Caco-2 (cell line): ENCODE measurements at regions of chr7 and their contacts with region 1.

Region 1: GRCh38 chr7:43834463-43835251 is 34.7 kb downstream of the MRPS24 start:
- DNase-seq: no peak
- H3K4me3 ChIP-seq: no peak overlapping the region
- H3K4me3 Mint-ChIP-seq: no peak overlapping the region
- H3K27ac Mint-ChIP-seq: no peak overlapping the region
- H3K4me1 ChIP-seq: 0 out of 2 replicates have a peak, but pooled peaks cover 3% of the 10 kb centered on the region
- H3K4me1 Mint-ChIP-seq: no peaks in the 10 kb centered on the region
- H3K27me3 ChIP-seq: no peaks in the 10 kb centered on the region
- H3K27me3 Mint-ChIP-seq: no peaks in the 10 kb centered on the region
- CTCF ChIP-seq: no peak

Region 2: DNA sequence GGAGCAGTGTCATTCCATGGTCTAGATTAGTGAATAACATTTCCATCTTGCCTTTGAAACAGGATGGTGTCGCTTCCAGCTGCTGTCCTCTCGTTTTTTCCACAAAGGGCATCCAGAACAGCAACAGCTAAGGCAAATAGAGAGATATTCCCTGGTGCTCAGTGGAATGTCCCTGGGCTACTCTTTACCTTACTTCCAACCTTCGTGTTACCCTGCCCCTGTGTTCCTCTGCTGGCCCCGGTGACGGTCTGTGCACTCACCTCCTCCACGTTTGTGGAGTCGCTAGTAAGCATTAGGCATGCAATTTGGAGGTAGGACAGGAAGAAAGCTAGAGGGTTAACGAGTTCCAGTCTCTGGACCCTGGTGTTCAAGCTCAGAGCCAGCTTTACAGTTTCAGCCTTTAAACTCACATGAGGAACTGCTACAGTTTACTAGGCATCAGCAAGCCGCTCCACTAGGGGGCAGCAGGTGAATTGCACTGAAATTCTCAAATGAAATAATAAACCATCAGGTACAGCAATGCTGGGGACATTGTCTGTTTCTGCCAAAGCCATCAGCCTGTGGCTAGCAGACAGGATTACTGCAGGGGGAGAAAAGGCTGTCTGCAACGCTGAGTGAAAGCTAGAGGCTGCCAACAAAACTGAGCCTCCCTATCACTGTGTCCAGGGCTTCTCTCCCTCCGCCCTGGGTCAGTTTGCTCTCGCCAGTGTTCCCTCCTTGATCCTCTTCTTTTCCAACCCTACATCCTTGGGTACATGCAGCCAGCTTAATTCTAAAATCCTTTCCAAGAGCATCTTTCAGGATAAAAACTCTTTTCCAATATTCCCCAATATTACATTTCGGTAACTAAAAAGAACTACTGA is 893.4 kb before region 1 on chr7:
- CTCF ChIA-PET with region 1: no interaction called
- POLR2A ChIA-PET with region 1: no interaction called
- intact Hi-C with region 1: loop called (anchors 2 kb)
- DNase-seq: peak; percentile 74 to 78
- H3K4me3 ChIP-seq: no peak overlapping the region
- H3K4me3 Mint-ChIP-seq: no peak overlapping the region
- H3K27ac Mint-ChIP-seq: no peak overlapping the region
- H3K4me1 ChIP-seq: no peaks in the 10 kb centered on the region
- H3K4me1 Mint-ChIP-seq: no peaks in the 10 kb centered on the region
- H3K27me3 ChIP-seq: no peaks in the 10 kb centered on the region
- H3K27me3 Mint-ChIP-seq: no peaks in the 10 kb centered on the region
- CTCF ChIP-seq: peak; percentile 86 to 91

Region 3: DNA sequence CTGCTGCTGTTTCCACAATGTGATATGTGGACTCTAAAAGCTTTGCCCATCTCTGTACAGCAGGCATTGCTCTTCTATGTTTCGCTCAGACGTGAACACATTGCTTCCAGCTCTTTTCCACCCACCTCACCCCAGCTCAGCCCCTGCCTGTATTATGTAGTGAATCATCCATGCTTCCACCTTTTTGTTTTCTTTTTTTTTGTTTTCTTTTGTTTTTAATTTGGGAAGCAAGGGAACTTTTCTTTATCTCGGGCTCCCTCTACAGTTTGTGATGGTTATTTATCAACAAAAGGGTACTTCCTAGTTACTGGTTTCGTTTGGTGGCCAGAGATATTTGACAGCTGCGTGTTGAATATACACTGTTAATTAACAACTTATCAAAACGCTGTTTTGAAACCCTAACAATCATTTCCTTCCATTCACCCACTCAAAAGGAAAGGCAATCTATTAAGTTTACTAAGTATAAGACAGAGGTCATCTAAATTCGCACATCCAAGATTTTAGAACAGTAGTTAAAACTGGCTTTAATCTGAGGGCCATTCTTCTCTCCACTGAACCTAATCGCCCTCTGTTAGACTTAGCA is 379.6 kb before region 1 on chr7:
- CTCF ChIA-PET with region 1: interaction called, 4 read pairs
- POLR2A ChIA-PET with region 1: no interaction called
- intact Hi-C with region 1: loop called (anchors 5 kb)
- DNase-seq: peak in 1 of 2 experiments; percentile 28
- H3K4me3 ChIP-seq: no peak overlapping the region
- H3K4me3 Mint-ChIP-seq: no peak overlapping the region
- H3K27ac Mint-ChIP-seq: no peak overlapping the region
- H3K4me1 ChIP-seq: peaks cover 13% of the 10 kb centered on the region; the same call in 1 of the 2 replicates
- H3K4me1 Mint-ChIP-seq: peaks cover 21% of the 10 kb centered on the region
- H3K27me3 ChIP-seq: no peaks in the 10 kb centered on the region
- H3K27me3 Mint-ChIP-seq: no peaks in the 10 kb centered on the region
- CTCF ChIP-seq: peak; percentile 45 to 50

Region 4: DNA sequence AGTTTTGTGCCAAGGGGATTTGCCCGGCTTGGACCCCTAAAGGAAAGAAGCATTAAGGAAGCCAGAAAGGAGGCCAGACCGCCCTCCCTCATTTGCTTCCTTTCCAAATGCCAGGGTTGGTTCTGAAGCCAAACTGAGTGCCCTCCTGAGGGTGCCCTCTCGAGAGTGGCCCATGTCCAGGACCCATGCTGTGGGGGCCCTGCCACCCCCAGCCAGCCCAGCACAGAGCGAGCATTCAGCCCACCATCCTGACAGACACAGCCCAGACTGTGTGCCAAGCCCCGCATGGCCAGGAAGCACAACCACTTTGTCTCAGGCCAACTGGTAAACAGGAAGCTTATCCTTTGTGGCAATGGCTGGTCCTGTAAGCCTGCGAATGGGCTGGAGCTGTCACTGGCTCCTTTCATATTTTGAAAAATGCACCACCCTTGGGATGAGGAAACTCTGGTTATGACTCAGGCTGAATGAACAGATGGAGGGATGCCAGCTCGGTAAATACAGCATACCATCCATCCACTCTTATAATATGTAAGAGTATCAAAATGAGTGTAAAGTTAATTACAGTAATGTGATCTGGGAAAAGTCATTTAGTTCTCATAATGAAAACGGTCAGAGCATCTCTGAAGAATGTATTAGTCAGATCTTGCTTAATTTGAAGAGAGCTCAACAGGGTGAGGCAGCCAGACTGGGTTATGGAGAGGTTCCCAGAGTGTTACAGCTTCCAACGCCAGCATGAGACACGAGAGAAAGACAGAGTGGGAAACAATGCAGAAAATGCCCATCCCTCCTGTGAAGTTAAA is 186.8 kb before region 1 on chr7:
- CTCF ChIA-PET with region 1: no interaction called
- POLR2A ChIA-PET with region 1: no interaction called
- intact Hi-C with region 1: loop called (anchors 10 kb)
- DNase-seq: no peak
- H3K4me3 ChIP-seq: no peak overlapping the region
- H3K4me3 Mint-ChIP-seq: no peak overlapping the region
- H3K27ac Mint-ChIP-seq: no peak overlapping the region
- H3K4me1 ChIP-seq: no peaks in the 10 kb centered on the region
- H3K4me1 Mint-ChIP-seq: no peaks in the 10 kb centered on the region
- H3K27me3 ChIP-seq: no peaks in the 10 kb centered on the region
- H3K27me3 Mint-ChIP-seq: no peaks in the 10 kb centered on the region
- CTCF ChIP-seq: no peak

Region 5: DNA sequence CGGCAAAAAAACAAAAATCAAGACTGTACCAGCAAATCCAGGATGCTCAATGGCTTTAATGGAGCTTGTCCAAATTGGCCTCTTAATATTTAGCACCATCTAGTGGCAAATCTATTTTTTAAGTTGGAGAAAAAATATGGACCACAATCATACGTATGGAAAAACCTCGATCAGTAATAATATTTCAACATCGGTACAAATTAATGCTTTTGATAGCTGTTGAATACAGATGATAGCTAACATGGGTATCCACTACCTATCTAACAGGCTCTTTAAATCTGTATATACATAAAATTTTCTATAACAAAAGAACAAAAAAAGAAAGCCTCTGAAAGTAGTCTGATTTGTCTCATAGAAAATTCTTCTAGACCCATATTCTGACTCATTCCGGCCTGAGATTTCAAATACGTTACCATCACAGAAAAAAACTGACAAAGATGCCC is 134.6 kb before region 1 on chr7:
- CTCF ChIA-PET with region 1: interaction called, 4 read pairs
- POLR2A ChIA-PET with region 1: no interaction called
- intact Hi-C with region 1: loop called (anchors 1 kb)
- DNase-seq: peak in 1 of 2 experiments; percentile 26
- H3K4me3 ChIP-seq: no peak overlapping the region
- H3K4me3 Mint-ChIP-seq: no peak overlapping the region
- H3K27ac Mint-ChIP-seq: no peak overlapping the region
- H3K4me1 ChIP-seq: 0 out of 2 replicates have a peak, but pooled peaks cover under 1% of the 10 kb centered on the region
- H3K4me1 Mint-ChIP-seq: no peaks in the 10 kb centered on the region
- H3K27me3 ChIP-seq: no peaks in the 10 kb centered on the region
- H3K27me3 Mint-ChIP-seq: no peaks in the 10 kb centered on the region
- CTCF ChIP-seq: peak; percentile 56 to 57

Region 6: GRCh38 chr7:43729214-43729923 is 105.3 kb before region 1 on chr7 and contains the start of gene COA1:
- CTCF ChIA-PET with region 1: interaction called, 4 read pairs
- POLR2A ChIA-PET with region 1: no interaction called
- intact Hi-C with region 1: loop called (anchors 2 kb)
- DNase-seq: peak; percentile 88 to 90
- H3K4me3 ChIP-seq: peak within 1 kb of the TSS; percentile 65
- H3K4me3 Mint-ChIP-seq: peak within 1 kb of the TSS; percentile 70
- H3K27ac Mint-ChIP-seq: peak within 1 kb of the TSS; percentile 82
- H3K4me1 ChIP-seq: peaks cover 11% of the 10 kb centered on the region; the same call in 1 of the 2 replicates
- H3K4me1 Mint-ChIP-seq: no peaks in the 10 kb centered on the region
- H3K27me3 ChIP-seq: no peaks in the 10 kb centered on the region
- H3K27me3 Mint-ChIP-seq: no peaks in the 10 kb centered on the region
- CTCF ChIP-seq: no peak
- total RNA-seq, gene COA1: 93.4 and 94.7 TPM in 2 replicates

Region 7: DNA sequence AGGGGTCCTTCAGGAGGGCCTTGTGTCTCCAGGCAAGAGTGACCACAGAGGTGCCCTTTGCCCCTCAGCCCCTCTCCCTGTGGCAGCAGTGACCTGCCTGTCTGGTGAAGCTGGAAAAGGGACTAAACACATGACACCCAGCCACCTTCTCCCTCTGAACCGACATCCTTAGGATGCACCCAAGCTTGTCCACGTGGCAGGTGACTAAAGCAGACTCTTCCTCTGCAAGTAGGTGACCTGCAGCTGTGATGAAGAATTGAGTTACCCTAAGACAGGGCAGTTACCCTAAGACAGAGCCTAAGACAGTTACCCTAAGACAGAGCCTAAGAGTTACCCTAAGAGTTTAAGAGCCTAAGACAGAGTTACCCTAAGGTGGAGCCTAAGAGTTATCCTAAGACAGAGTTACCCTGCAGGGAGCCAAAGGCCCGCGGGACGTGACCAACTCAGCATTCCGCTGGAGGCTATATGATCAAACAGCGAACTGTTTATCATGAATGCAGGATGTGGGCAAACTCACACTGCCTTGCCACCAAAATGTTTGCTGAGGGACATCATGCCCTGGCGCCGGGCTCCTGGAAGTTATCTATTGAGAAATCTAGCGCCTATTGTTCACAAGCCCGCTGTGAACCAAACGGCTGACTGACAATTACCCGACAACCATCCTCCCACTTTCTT is 26.4 kb before region 1 on chr7:
- CTCF ChIA-PET with region 1: no interaction called
- POLR2A ChIA-PET with region 1: no interaction called
- intact Hi-C with region 1: loop called (anchors 1 kb)
- DNase-seq: no peak
- H3K4me3 ChIP-seq: no peak overlapping the region
- H3K4me3 Mint-ChIP-seq: no peak overlapping the region
- H3K27ac Mint-ChIP-seq: no peak overlapping the region
- H3K4me1 ChIP-seq: no peaks in the 10 kb centered on the region
- H3K4me1 Mint-ChIP-seq: no peaks in the 10 kb centered on the region
- H3K27me3 ChIP-seq: no peaks in the 10 kb centered on the region
- H3K27me3 Mint-ChIP-seq: no peaks in the 10 kb centered on the region
- CTCF ChIP-seq: no peak

Region 8: GRCh38 chr7:44565097-44565794 is 730.6 kb after region 1 on chr7:
- CTCF ChIA-PET with region 1: no interaction called
- POLR2A ChIA-PET with region 1: no interaction called
- intact Hi-C with region 1: no loop called
- DNase-seq: peak; percentile 65 to 79
- H3K4me3 ChIP-seq: no peak overlapping the region
- H3K4me3 Mint-ChIP-seq: no peak overlapping the region
- H3K27ac Mint-ChIP-seq: peak overlapping the region; percentile 82
- H3K4me1 ChIP-seq: peaks cover 27% of the 10 kb centered on the region
- H3K4me1 Mint-ChIP-seq: peaks cover 20% of the 10 kb centered on the region
- H3K27me3 ChIP-seq: no peaks in the 10 kb centered on the region
- H3K27me3 Mint-ChIP-seq: no peaks in the 10 kb centered on the region
- CTCF ChIP-seq: peak; percentile 94 to 97